ENCODE measurements at regions of chr7 and their contacts with region 1.

Region 1: GRCh38 chr7:42931834-42932651 is at the starts of genes MRPL32 and PSMA2:
- DNase-seq: peak; percentile 96 to 97
- H3K4me3 ChIP-seq: peak within 1 kb of the TSS; percentile 90
- H3K4me3 Mint-ChIP-seq: peak within 1 kb of the TSS; percentile 95
- H3K27ac Mint-ChIP-seq: peak within 1 kb of the TSS; percentile 99
- H3K4me1 ChIP-seq: peaks cover 10% of the 10 kb centered on the region
- H3K4me1 Mint-ChIP-seq: peaks cover 14% of the 10 kb centered on the region
- H3K27me3 ChIP-seq: no peaks in the 10 kb centered on the region
- H3K27me3 Mint-ChIP-seq: no peaks in the 10 kb centered on the region
- CTCF ChIP-seq: no peak
- total RNA-seq, gene MRPL32: 61.6 and 63.6 TPM in 2 replicates
- total RNA-seq, gene PSMA2: 147 and 159 TPM in 2 replicates

Region 2: GRCh38 chr7:42886129-42886528 is 45.9 kb before region 1 on chr7:
- CTCF ChIA-PET with region 1: no interaction called
- POLR2A ChIA-PET with region 1: interaction called, 3 read pairs
- intact Hi-C with region 1: loop called (anchors 2 kb)
- DNase-seq: no peak
- H3K4me3 ChIP-seq: no peak overlapping the region
- H3K4me3 Mint-ChIP-seq: peak overlapping the region; percentile 14
- H3K27ac Mint-ChIP-seq: no peak overlapping the region
- H3K4me1 ChIP-seq: peaks cover 9% of the 10 kb centered on the region
- H3K4me1 Mint-ChIP-seq: peaks cover 16% of the 10 kb centered on the region
- H3K27me3 ChIP-seq: no peaks in the 10 kb centered on the region
- H3K27me3 Mint-ChIP-seq: no peaks in the 10 kb centered on the region
- CTCF ChIP-seq: peak; percentile 36 to 39